ENCODE measurements at regions of chr11 and their contacts with region 1.

Region 1: DNA sequence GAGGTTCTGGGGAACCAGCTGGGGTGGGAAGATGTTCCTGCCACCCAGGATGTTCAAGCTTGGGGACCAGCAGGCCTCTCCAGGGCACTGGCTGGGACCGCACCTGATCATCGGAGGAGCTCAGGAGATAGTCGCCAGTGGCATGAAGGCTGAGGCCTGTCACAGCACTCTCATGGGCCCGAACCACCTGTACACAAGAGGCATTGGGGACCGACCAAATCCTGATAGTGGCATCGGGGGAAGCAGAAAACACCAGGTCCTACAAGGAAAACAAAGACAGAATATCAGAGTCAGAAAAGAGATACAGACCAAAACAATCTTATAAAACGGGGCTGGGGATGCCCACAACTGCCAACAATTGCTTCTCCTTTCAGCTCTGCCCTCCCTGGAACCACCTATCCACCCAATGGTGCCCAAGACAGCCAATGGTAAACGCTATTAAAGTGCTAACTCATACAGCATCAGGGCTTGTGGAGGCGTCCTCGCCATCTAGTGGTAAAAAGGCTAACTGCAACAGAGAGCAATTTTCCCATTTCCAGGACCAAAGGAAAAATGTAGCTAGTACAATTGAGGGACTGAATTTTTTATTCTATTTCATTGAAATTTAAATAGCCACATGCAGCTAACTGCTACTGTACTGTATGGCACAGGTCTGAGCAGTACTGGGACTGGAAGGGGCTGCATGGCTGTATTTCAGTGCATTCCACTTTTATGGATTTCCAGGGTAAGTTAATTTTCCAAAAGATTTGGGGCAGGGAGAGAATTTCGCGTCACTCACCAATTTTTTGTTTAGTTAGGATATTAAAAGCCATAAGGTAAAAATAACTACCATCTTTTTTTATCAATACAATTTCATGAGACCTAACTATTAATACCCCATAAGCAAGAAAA is 7.1 kb downstream of the PRPF19 start:
- DNase-seq: no peak
- H3K4me3 ChIP-seq: no peak overlapping the region
- H3K27me3 ChIP-seq: no peaks in the 10 kb centered on the region
- CTCF ChIP-seq: peak; percentile 95

Region 2: GRCh38 chr11:60064111-60064510 is 835.2 kb before region 1 on chr11:
- CTCF ChIA-PET with region 1: no interaction called
- POLR2A ChIA-PET with region 1: no interaction called
- DNase-seq: no peak
- H3K4me3 ChIP-seq: no peak overlapping the region
- H3K27me3 ChIP-seq: no peaks in the 10 kb centered on the region
- CTCF ChIP-seq: no peak

Region 3: DNA sequence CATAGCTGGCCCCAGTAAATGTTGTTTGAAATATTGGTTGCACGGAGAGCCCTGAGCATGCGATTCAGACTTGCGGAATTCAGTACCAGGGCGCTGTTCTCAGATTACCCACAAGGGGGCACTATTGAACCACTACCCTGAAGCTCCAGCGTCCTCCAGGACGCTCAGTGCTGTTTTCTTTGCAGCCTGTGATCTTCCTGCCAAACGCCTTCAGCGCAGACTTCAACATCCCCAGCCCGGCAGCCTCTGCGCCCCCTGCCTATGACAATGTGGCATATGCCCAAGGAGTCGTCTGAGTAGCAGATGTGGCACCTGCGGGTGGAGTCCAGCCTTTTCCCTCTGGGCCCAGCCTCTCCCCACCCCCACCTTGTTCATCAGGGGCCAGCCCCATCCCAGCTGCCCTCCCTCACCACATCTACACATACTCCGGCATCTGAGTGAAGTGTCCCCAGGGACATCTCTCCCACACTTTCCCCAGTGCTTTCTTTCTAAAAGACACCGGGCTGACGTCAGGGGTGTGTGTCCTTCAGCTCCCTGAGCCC is 123.8 kb before region 1 on chr11:
- CTCF ChIA-PET with region 1: interaction called, 35 read pairs
- POLR2A ChIA-PET with region 1: no interaction called
- DNase-seq: peak; percentile 50
- H3K4me3 ChIP-seq: no peak overlapping the region
- H3K27me3 ChIP-seq: peaks cover 1% of the 10 kb centered on the region; the same call in 1 of the 2 replicates
- CTCF ChIP-seq: peak; percentile 92

Region 4: DNA sequence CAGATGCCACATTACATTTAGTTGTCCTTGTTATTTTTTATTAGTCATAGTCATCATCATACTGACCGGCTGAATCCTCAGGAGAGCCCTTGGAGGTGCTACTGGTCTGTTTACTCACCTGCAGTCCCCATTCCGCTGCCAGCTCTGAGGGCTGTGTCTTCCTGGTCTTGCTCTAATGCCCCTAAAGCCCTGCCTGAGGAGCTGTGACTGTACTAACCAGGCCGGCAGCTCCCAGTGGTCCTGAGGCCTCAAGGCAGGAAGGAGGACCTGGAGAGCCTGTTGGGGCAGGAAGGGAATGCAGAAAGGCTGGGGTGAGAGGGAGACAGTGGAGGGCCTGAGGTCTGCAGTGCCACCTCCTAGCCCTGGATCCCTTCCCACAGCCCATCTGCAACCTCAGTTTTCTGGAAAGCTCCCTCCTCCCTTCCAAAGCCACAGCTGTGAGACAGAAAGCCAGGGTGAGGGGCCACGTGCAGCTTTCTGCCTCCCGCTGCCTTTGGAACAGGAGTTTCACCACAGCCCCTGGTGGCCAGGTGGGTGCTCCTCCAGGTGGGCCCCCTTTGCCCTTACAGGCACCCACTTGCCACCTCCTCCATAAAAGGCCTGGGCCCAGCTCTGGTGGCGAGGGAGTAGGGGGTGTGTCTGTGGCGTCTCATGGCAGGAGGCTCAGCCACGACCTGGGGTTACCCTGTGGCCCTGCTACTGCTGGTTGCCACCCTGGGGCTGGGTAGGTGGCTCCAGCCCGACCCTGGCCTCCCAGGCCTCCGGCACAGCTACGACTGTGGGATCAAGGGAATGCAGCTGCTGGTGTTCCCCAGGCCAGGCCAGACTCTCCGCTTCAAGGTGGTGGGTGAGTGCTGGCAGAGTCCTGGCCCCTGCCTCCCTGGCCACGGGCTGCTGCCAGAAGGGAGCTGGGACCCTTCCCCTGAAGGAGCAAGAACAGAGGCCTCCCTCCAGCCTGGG is 32.1 kb before region 1 on chr11 and contains the start of gene ZP1:
- CTCF ChIA-PET with region 1: interaction called, 21 read pairs
- POLR2A ChIA-PET with region 1: no interaction called
- DNase-seq: no peak
- H3K4me3 ChIP-seq: no peak within 1 kb of the TSS
- H3K27me3 ChIP-seq: no peaks in the 10 kb centered on the region; the same call in 1 of the 2 replicates
- CTCF ChIP-seq: no peak
- polyA plus RNA-seq, gene ZP1: 0.36 and 0.67 TPM in 2 replicates

Region 5: DNA sequence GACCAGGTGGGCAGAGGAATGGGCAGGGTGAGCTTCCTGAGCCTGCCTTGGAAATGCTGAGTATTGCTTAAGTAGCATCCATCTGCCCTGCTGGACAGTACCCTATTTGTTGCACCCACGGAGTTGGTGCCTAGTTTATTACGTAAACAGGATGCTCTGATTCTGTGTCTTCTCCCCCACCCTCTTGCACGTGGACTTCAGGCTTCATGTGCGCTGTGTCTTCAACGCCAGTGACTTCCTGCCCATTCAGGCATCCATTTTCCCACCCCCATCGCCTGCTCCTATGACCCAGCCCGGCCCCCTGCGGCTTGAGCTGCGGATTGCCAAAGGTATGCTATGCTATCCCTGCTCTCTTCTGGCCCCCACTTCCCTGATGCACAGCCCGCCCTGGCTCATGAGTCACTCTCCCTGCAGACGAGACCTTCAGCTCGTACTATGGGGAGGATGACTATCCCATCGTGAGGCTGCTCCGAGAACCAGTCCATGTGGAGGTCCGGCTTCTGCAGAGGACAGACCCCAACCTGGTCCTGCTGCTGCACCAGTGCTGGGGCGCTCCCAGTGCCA is 26.2 kb before region 1 on chr11:
- CTCF ChIA-PET with region 1: interaction called, 21 read pairs
- POLR2A ChIA-PET with region 1: no interaction called
- DNase-seq: peak; percentile 21
- H3K4me3 ChIP-seq: no peak overlapping the region
- H3K27me3 ChIP-seq: no peaks in the 10 kb centered on the region
- CTCF ChIP-seq: no peak

Region 6: DNA sequence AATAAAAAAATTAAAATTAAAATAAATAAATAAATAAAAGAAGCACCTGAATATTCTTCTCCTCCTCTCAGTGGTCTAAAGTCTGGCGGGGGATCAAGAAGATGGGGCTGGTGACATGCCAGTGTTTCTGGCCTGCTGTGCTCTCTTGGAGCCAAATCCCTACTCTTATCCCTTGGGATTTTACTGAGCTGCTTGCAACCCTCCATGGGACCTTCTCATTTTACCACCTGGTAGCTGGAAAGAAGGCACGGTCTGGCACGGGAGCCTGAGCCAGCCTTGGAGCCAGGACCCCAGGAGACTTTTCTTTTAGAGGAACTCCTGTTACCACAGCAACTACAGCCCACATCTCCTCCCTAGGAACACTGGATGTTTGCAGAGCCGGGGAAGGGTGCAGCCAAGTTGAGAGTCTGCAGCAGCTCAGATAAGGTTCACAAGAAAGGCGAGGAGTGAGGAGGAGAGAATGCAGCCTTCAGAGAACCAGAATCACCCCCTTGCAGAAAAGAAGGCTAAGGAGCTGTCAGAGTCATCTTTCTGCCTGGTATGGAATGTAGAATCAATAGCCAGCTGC is 93.6 kb after region 1 on chr11:
- CTCF ChIA-PET with region 1: no interaction called
- POLR2A ChIA-PET with region 1: no interaction called
- DNase-seq: no peak
- H3K4me3 ChIP-seq: no peak overlapping the region
- H3K27me3 ChIP-seq: peaks cover 16% of the 10 kb centered on the region
- CTCF ChIP-seq: no peak